Pancreas (tissue), 10 donors: ENCODE measurements at regions of chr11 and their contacts with region 1.

Region 1: GRCh38 chr11:92413757-92414513 is 189.3 kb downstream of the FAT3 start:
- DNase-seq: no peak
- ATAC-seq: no peak
- H3K4me3 ChIP-seq: no peak overlapping the region
- H3K27ac ChIP-seq: no peak overlapping the region
- H3K4me1 ChIP-seq: no peaks in the 10 kb centered on the region
- H3K27me3 ChIP-seq: no peaks in the 10 kb centered on the region
- CTCF ChIP-seq: no peak

Region 2: DNA sequence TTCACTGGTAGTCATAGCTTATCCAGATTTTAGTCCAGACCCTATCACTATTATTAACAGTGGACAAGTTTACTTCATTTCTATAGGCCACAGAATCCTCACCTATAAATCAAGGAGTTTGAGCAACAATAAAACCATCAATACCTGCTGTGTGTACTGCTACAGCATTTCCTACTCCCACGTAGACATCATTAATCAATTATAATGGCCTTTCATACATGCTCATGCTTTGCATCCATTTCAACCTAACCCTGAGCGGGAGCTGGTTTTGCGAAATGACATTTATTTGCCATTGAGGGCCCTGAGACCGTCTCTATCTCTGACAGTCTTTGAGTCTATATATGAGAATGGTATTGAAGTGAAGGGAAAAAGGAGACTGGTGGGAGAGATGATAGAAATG is 123.0 kb after region 1 on chr11:
- intact Hi-C with region 1: loop called in 1 of 3 experiments (anchors 5 kb)
- DNase-seq: no peak
- ATAC-seq: no peak
- H3K4me3 ChIP-seq: no peak overlapping the region
- H3K27ac ChIP-seq: no peak overlapping the region
- H3K4me1 ChIP-seq: no peaks in the 10 kb centered on the region
- H3K27me3 ChIP-seq: no peaks in the 10 kb centered on the region
- CTCF ChIP-seq: no peak